PC-9 (cell line): ENCODE measurements at regions of chr14 and their contacts with region 1.

Region 1: GRCh38 chr14:54108481-54109471 is 152.2 kb upstream of the BMP4 start:
- DNase-seq: peak; percentile 45 to 75
- H3K4me3 ChIP-seq: no peak overlapping the region
- H3K27ac ChIP-seq: peak overlapping the region; percentile 53
- H3K4me1 ChIP-seq: peaks cover 57% of the 10 kb centered on the region
- H3K27me3 ChIP-seq: no peaks in the 10 kb centered on the region
- CTCF ChIP-seq: no peak

Region 2: GRCh38 chr14:53458368-53458814 is 650.4 kb before region 1 on chr14:
- CTCF ChIA-PET with region 1: no interaction called
- POLR2A ChIA-PET with region 1: no interaction called
- intact Hi-C with region 1: loop called (anchors 10 kb)
- DNase-seq: peak; percentile 54 to 91
- H3K4me3 ChIP-seq: no peak overlapping the region
- H3K27ac ChIP-seq: peak overlapping the region; percentile 43
- H3K4me1 ChIP-seq: peaks cover 18% of the 10 kb centered on the region
- H3K27me3 ChIP-seq: no peaks in the 10 kb centered on the region
- CTCF ChIP-seq: no peak

Region 3: GRCh38 chr14:53735916-53736315 is 372.9 kb before region 1 on chr14:
- CTCF ChIA-PET with region 1: interaction called, 22 read pairs
- POLR2A ChIA-PET with region 1: no interaction called
- intact Hi-C with region 1: no loop called
- DNase-seq: no peak
- H3K4me3 ChIP-seq: no peak overlapping the region
- H3K27ac ChIP-seq: no peak overlapping the region
- H3K4me1 ChIP-seq: no peaks in the 10 kb centered on the region
- H3K27me3 ChIP-seq: no peaks in the 10 kb centered on the region
- CTCF ChIP-seq: no peak

Region 4: GRCh38 chr14:53894456-53894855 is 214.3 kb before region 1 on chr14:
- CTCF ChIA-PET with region 1: no interaction called
- POLR2A ChIA-PET with region 1: no interaction called
- intact Hi-C with region 1: no loop called
- DNase-seq: no peak
- H3K4me3 ChIP-seq: no peak overlapping the region
- H3K27ac ChIP-seq: no peak overlapping the region
- H3K4me1 ChIP-seq: no peaks in the 10 kb centered on the region
- H3K27me3 ChIP-seq: no peaks in the 10 kb centered on the region
- CTCF ChIP-seq: no peak

Region 5: DNA sequence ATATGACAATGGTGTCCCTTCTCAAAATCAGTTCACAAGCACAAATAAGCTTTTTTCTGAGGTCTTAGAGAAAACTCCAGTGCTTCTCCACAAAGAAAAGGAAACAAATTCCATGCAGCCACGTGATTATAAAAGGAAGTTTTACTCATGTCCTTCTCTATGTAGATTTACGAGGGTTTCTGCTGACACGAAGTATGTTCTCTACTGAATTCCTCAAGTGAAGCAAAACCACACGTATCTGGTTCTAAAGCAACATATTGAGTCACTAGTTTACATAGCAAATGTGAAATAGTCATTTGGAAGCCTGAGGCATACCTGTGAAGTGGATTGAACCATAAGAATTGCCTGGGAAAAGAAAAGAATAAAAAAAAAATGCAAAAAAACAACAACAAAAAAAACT is 184.0 kb before region 1 on chr14:
- CTCF ChIA-PET with region 1: no interaction called
- POLR2A ChIA-PET with region 1: no interaction called
- intact Hi-C with region 1: loop called (anchors 2 kb)
- DNase-seq: peak in 1 of 2 experiments; percentile 94
- H3K4me3 ChIP-seq: no peak overlapping the region
- H3K27ac ChIP-seq: peak overlapping the region; percentile 52
- H3K4me1 ChIP-seq: peaks cover 32% of the 10 kb centered on the region
- H3K27me3 ChIP-seq: no peaks in the 10 kb centered on the region
- CTCF ChIP-seq: no peak

Region 6: DNA sequence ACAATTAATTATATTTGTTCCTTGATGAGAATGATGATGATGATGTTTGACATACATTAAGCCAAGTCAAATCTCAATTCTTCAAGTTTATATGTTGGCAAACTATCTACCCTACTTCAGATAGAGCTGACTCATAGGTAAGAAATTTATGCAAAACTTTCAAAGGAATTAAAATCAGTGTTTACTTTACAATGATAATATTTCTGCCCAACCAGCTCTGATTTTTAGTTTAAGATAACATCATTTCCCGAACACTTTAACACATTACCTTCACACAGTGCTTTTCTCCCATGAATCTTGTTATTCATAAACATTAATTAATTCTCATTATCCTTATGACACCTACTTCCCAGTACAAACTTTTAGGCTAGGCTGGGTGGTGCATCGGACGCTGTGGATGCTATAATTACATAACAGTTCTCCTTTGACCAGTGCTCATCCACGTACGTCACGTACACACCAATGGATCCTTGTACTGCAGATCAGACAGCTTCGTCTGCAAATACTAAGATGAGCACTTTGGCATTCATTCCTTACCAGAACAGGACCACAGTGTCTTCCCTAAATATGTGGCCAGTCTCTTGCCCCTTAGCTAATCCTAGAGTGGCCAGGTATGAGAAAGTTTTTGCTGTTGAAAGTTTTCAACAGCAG is 170.5 kb before region 1 on chr14:
- CTCF ChIA-PET with region 1: no interaction called
- POLR2A ChIA-PET with region 1: no interaction called
- intact Hi-C with region 1: no loop called
- DNase-seq: peak in 1 of 2 experiments; percentile 61
- H3K4me3 ChIP-seq: no peak overlapping the region
- H3K27ac ChIP-seq: no peak overlapping the region
- H3K4me1 ChIP-seq: 0 out of 2 replicates have a peak, but pooled peaks cover 9% of the 10 kb centered on the region
- H3K27me3 ChIP-seq: no peaks in the 10 kb centered on the region
- CTCF ChIP-seq: no peak

Region 7: GRCh38 chr14:54085232-54085761 is 23.5 kb before region 1 on chr14:
- CTCF ChIA-PET with region 1: no interaction called
- POLR2A ChIA-PET with region 1: no interaction called
- intact Hi-C with region 1: loop called (anchors 1 kb)
- DNase-seq: no peak
- H3K4me3 ChIP-seq: no peak overlapping the region
- H3K27ac ChIP-seq: no peak overlapping the region
- H3K4me1 ChIP-seq: no peaks in the 10 kb centered on the region
- H3K27me3 ChIP-seq: no peaks in the 10 kb centered on the region
- CTCF ChIP-seq: no peak

Region 8: DNA sequence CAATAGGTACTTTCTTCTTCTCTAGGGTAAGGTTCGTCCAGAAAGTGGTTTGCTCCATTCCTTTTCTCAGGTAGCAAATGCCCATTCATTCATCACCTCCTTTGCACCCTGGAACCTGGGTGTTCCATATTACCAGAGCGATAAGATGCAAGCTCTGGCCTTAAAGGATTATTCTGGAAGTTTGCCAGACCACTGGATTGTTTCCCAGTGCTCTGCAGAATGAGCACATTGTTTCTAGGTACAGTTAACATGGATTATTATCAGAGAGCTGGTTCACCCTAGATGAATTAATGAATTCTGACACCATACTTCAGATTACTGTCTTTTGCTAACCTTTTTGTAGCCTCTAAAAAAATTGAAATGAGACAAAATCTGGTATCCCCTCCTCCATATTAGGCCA is 18.8 kb after region 1 on chr14:
- CTCF ChIA-PET with region 1: no interaction called
- POLR2A ChIA-PET with region 1: no interaction called
- intact Hi-C with region 1: no loop called
- DNase-seq: no peak
- H3K4me3 ChIP-seq: no peak overlapping the region
- H3K27ac ChIP-seq: no peak overlapping the region
- H3K4me1 ChIP-seq: no peaks in the 10 kb centered on the region
- H3K27me3 ChIP-seq: no peaks in the 10 kb centered on the region
- CTCF ChIP-seq: no peak

Region 9: GRCh38 chr14:54211551-54212308 is 103.0 kb after region 1 on chr14:
- CTCF ChIA-PET with region 1: interaction called, 3 read pairs
- POLR2A ChIA-PET with region 1: interaction called, 25 read pairs
- intact Hi-C with region 1: loop called (anchors 2 kb)
- DNase-seq: peak; percentile 20 to 70
- H3K4me3 ChIP-seq: no peak overlapping the region
- H3K27ac ChIP-seq: peak overlapping the region; percentile 9
- H3K4me1 ChIP-seq: peaks cover 21% of the 10 kb centered on the region
- H3K27me3 ChIP-seq: no peaks in the 10 kb centered on the region
- CTCF ChIP-seq: no peak

Region 10: DNA sequence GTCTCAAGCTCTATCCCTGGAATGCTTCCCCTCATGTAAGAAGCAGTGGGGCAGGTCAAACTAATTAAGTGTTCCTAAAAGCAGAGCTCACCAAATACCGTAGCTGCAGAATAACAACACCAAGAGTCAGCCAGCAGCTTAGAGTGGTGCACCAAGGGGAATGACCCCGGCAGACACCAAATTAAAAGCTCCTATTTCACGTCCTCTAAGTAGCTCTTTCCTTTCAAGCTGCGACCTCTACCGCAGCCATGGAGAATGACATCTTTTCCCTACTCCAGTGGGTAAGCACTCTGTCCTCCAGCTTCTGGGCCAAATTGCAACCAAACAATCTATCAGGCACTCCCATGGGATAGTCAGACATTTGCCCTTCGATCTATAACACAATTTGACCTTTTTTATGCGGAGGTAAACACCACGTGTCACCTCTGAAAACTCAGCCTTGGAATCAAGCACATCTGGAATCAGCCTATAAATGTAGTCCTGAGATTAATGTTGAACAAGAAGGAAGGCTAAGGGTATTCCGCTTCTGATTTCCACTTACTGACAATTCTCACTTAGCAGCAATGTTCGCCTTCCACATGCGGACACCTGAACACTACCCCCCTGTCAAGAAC is 220.4 kb after region 1 on chr14:
- CTCF ChIA-PET with region 1: interaction called, 11 read pairs
- POLR2A ChIA-PET with region 1: interaction called, 5 read pairs
- intact Hi-C with region 1: loop called (anchors 5 kb)
- DNase-seq: peak; percentile 39 to 47
- H3K4me3 ChIP-seq: no peak overlapping the region
- H3K27ac ChIP-seq: no peak overlapping the region
- H3K4me1 ChIP-seq: no peaks in the 10 kb centered on the region
- H3K27me3 ChIP-seq: no peaks in the 10 kb centered on the region
- CTCF ChIP-seq: peak; percentile 49